CD8-positive, alpha-beta memory T cell (primary cell): ENCODE measurements at regions of chr7 and their contacts with region 1.

Region 1: DNA sequence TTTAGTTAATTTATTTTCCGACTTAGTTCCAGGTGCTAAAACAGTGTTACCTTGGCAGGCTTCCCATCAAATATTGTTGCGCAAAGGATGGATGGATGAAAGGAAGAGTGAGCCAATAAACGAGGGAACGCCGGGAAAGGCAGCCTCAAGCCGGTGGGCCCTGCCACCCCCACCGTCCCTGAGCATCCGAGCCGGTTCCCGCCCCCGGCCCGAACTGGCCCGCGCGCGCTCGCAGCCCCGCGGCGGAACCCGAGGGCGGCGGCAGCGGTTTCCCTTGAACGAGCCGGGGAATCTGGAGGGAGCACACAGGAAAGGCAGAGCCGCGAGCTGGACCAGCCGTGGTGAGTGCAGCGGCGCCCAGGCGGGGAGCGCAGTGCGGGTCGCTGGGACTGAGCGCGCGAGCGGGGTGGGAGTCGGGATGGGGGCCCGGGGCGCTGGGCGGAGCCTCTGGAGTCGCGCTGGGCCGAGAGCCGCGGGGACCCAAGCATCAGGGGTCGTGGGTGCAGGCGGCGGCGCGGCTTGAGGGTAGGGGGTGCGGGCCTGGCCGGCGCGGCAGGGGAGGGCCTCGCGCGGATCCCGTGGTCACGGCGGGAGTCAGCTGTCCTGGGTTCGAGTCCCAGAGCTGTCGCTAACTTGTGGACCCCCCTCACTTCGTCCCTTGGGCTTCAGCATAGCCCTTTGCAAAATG is at the start of gene AGK:
- DNase-seq: peak; percentile 56 to 80 (median 70)
- H3K4me3 ChIP-seq: peak within 1 kb of the TSS; percentile 86
- H3K4me3 Mint-ChIP-seq: peak within 1 kb of the TSS; percentile 86 to 98 (median 91)
- H3K27ac ChIP-seq: peak within 1 kb of the TSS; percentile 61
- H3K27ac Mint-ChIP-seq: peak within 1 kb of the TSS; percentile 88 to 99 (median 94)
- H3K4me1 ChIP-seq: peaks cover 16% of the 10 kb centered on the region
- H3K4me1 Mint-ChIP-seq: peaks cover 33 to 44% (median 40%) of the 10 kb centered on the region in 3 donors
- H3K27me3 ChIP-seq: no peaks in the 10 kb centered on the region
- H3K27me3 Mint-ChIP-seq: no peaks in the 10 kb centered on the region
- total RNA-seq, gene AGK: 88.5 to 94.3 TPM

Region 2: DNA sequence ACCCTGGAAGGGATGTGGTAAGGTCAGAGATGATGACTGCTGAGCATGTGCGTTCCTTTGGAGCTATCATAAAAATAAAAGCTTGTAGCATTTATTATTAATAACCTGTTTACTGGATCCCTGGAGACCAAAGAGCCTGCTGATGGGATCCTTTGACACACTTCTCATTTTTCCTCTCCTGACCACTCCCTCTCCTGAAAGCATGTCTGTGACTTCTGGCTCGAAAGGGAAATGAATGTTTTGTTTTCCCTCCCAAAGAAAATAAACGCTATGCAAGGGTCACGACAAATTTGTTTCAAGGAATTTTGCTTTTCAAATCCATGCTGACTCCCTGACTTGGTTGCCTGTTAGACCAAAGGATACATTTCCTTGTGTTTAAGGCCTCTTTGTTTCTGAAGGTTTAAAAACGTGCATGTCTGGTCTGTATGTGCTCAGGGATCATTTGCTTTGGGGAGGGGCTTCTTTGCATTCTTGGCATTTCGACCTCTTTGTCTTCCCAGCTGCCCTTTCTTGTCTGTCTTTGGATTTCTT is 185.1 kb before region 1 on chr7:
- CTCF ChIA-PET with region 1: no interaction called
- POLR2A ChIA-PET with region 1: no interaction called
- DNase-seq: no peak
- H3K4me3 ChIP-seq: no peak overlapping the region
- H3K4me3 Mint-ChIP-seq: no peak overlapping the region
- H3K27ac ChIP-seq: no peak overlapping the region
- H3K27ac Mint-ChIP-seq: no peak overlapping the region
- H3K4me1 ChIP-seq: no peaks in the 10 kb centered on the region
- H3K4me1 Mint-ChIP-seq: no peaks in the 10 kb centered on the region
- H3K27me3 ChIP-seq: no peaks in the 10 kb centered on the region
- H3K27me3 Mint-ChIP-seq: peaks cover 8 to 12% of the 10 kb centered on the region in 2 donors

Region 3: GRCh38 chr7:141533149-141533949 is 17.9 kb before region 1 on chr7:
- CTCF ChIA-PET with region 1: interaction called, 10 read pairs
- POLR2A ChIA-PET with region 1: no interaction called
- DNase-seq: peak; percentile 28 to 64 (median 38)
- H3K4me3 ChIP-seq: no peak overlapping the region
- H3K4me3 Mint-ChIP-seq: no peak overlapping the region
- H3K27ac ChIP-seq: no peak overlapping the region
- H3K27ac Mint-ChIP-seq: no peak overlapping the region
- H3K4me1 ChIP-seq: no peaks in the 10 kb centered on the region
- H3K4me1 Mint-ChIP-seq: peaks cover 0 to 5% (median 2%) of the 10 kb centered on the region in 3 donors
- H3K27me3 ChIP-seq: peaks cover 6% of the 10 kb centered on the region
- H3K27me3 Mint-ChIP-seq: peaks cover 8 to 40% of the 10 kb centered on the region in 2 donors

Region 4: GRCh38 chr7:141585592-141586510 is 34.6 kb after region 1 on chr7:
- CTCF ChIA-PET with region 1: no interaction called
- POLR2A ChIA-PET with region 1: no interaction called
- DNase-seq: no peak
- H3K4me3 ChIP-seq: no peak overlapping the region
- H3K4me3 Mint-ChIP-seq: peak overlapping the region in 1 of 7 donors; percentile 72
- H3K27ac ChIP-seq: no peak overlapping the region
- H3K27ac Mint-ChIP-seq: peak overlapping the region in 7 of 8 donors; percentile 8 to 71 (median 49)
- H3K4me1 ChIP-seq: no peaks in the 10 kb centered on the region
- H3K4me1 Mint-ChIP-seq: peaks cover 50 to 73% (median 72%) of the 10 kb centered on the region in 3 donors
- H3K27me3 ChIP-seq: no peaks in the 10 kb centered on the region
- H3K27me3 Mint-ChIP-seq: no peaks in the 10 kb centered on the region

Region 5: GRCh38 chr7:141737834-141738591 is 186.8 kb after region 1 on chr7 and contains the start of gene SSBP1:
- CTCF ChIA-PET with region 1: interaction called, 11 read pairs
- POLR2A ChIA-PET with region 1: interaction called, 9 read pairs
- DNase-seq: peak; percentile 80 to 93 (median 92)
- H3K4me3 ChIP-seq: peak within 1 kb of the TSS; percentile 76
- H3K4me3 Mint-ChIP-seq: peak within 1 kb of the TSS; percentile 93 to 99 (median 98)
- H3K27ac ChIP-seq: peak within 1 kb of the TSS; percentile 85
- H3K27ac Mint-ChIP-seq: peak within 1 kb of the TSS; percentile 88 to 99 (median 98)
- H3K4me1 ChIP-seq: peaks cover 33% of the 10 kb centered on the region
- H3K4me1 Mint-ChIP-seq: peaks cover 42 to 66% (median 63%) of the 10 kb centered on the region in 3 donors
- H3K27me3 ChIP-seq: no peaks in the 10 kb centered on the region
- H3K27me3 Mint-ChIP-seq: no peaks in the 10 kb centered on the region
- total RNA-seq, gene SSBP1: 284 to 291 TPM